Activated CD8-positive, alpha-beta memory T cell treated with anti-CD3 and anti-CD28 coated beads, Interleukin-2, amount 10 ng/mL, durations not matched to agents 7 days and 5 days (primary cell): ENCODE measurements at regions of chr7 and their contacts with region 1.

Region 1: DNA sequence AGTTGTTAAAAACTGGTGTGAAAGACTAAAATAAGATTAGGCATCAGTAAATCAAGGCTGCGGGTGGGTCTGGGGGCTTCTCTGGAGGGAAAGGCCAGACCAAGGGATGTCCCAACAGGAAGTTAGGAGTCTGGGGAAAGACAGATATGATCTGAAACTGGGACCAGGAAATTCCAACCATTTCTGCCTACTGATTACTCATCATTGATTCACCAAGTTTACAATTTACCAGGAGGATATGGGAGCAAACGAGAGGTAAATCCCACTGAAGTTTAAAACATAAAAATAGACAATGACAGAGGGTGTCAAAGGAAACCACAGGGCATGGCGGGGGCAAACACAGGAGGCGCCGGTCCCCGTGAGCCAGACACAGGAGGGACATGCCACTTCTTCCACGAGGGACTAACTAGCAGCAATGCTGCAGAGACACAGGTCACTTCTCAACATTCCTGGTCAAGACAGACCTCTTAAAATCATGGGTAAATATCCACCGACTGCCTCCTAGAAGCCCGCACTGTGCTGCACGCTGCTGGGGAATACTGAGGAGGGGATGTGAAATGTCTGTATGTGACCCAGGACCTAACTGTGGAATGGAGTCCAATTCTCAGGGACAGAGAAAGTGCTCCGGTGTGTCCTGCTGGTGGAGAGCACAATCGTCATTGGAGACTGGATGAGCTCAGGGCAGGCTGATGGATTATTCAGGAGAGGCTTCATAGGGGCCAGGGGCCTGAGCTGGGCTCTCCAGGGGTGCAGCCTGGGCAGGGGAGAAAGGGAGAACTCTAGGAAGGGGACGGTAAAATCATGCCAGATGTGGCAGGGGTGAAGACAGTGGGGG is 153.4 kb upstream of the KLF14 start:
- DNase-seq: no peak
- ATAC-seq: no peak
- H3K4me3 Mint-ChIP-seq: no peak overlapping the region
- H3K27ac Mint-ChIP-seq: peak overlapping the region; percentile 45
- H3K4me1 Mint-ChIP-seq: peaks cover 51% of the 10 kb centered on the region
- H3K27me3 Mint-ChIP-seq: no peaks in the 10 kb centered on the region

Region 2: GRCh38 chr7:130875265-130875741 is 12.1 kb before region 1 on chr7:
- CTCF ChIA-PET with region 1: interaction called, 11 read pairs
- DNase-seq: peak; percentile 67
- ATAC-seq: peak; percentile 85
- H3K4me3 Mint-ChIP-seq: no peak overlapping the region
- H3K27ac Mint-ChIP-seq: peak overlapping the region; percentile 62
- H3K4me1 Mint-ChIP-seq: peaks cover 30% of the 10 kb centered on the region
- H3K27me3 Mint-ChIP-seq: no peaks in the 10 kb centered on the region

Region 3: DNA sequence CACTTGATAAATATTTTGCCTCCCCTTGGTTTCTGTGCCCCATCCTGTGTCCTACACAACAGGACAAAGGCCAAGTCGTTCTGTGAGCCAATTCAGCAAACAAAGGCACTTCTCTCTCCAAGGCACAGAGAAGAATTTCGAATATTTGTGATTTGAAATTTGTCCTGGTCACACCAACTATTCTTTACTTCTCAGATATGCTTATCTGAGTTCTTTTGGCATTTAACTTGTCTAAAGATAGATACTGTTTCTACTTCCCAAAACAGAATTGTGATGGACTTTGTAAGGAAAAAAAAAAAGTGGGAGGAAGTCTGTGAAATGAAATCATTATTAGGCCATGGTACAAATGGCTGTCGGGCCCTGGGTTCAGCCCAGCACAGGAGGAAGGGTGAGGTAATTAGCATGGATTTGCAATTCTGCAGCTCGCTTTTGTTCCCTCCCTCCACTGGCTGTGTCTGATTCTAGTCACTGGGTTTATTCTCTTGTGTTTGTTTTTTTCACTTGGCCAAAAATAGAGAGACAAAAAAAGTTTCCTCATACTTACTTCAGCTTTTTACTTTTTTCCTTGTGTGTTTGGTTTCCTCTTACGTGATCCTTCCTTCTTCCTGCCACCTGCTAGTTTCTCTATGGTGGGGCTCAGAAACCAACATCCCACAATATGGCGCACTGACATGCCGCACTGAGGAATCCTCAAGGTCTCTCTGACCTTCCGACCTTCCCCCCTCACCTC is 332.1 kb after region 1 on chr7:
- CTCF ChIA-PET with region 1: no interaction called
- DNase-seq: no peak
- ATAC-seq: no peak
- H3K4me3 Mint-ChIP-seq: no peak overlapping the region
- H3K27ac Mint-ChIP-seq: no peak overlapping the region
- H3K4me1 Mint-ChIP-seq: peaks cover 11% of the 10 kb centered on the region
- H3K27me3 Mint-ChIP-seq: no peaks in the 10 kb centered on the region